Dorsolateral prefrontal cortex (tissue), 120 donors: ENCODE measurements at regions of chr1 and their contacts with region 1.

Region 1: DNA sequence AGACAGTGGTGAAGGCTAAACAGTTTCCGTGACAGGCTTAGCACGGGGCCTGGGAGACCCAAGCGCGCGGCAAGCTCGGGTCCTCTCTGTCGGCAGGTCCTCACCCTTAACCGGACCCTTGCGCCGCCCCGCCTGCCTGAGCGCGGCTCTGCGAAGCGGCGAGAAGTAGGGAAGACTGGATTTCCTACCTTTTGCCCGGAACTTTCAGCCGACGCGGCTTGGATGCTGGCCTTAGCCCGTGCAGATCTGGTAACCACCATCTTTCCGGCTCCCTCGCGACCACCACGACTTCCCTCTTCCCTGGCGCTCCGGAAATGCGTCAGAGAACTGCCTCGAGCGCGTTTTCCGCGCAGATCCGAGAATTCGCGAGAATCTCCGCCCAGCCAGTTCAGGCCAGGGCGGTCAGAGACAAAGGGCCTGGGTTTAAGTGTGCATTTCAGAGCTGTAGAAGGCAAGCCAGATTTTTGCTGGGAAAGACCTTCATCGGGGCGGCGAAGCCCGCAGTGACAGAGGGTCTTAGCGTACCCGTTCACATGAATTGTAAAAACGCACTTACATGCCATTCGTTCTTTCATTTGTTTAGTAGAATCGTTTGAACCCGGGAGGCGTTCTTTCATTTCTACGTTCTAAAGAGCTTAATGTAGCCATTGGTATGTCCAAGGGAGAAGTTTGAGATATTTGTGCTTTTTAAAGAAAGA is at the start of gene DNTTIP2:
- DNase-seq: peak; percentile 82 to 95 (median 92)
- H3K4me3 ChIP-seq: peak within 1 kb of the TSS; percentile 70 to 99 (median 93)
- H3K27ac ChIP-seq: peak within 1 kb of the TSS; percentile 35 to 99 (median 95)
- H3K27me3 ChIP-seq: no peaks in the 10 kb centered on the region
- CTCF ChIP-seq: peak in 28 of 56 donors; percentile 6 to 56 (median 21)
- total RNA-seq, gene DNTTIP2: 26.4 to 67.8 (median 41.9) TPM

Region 2: DNA sequence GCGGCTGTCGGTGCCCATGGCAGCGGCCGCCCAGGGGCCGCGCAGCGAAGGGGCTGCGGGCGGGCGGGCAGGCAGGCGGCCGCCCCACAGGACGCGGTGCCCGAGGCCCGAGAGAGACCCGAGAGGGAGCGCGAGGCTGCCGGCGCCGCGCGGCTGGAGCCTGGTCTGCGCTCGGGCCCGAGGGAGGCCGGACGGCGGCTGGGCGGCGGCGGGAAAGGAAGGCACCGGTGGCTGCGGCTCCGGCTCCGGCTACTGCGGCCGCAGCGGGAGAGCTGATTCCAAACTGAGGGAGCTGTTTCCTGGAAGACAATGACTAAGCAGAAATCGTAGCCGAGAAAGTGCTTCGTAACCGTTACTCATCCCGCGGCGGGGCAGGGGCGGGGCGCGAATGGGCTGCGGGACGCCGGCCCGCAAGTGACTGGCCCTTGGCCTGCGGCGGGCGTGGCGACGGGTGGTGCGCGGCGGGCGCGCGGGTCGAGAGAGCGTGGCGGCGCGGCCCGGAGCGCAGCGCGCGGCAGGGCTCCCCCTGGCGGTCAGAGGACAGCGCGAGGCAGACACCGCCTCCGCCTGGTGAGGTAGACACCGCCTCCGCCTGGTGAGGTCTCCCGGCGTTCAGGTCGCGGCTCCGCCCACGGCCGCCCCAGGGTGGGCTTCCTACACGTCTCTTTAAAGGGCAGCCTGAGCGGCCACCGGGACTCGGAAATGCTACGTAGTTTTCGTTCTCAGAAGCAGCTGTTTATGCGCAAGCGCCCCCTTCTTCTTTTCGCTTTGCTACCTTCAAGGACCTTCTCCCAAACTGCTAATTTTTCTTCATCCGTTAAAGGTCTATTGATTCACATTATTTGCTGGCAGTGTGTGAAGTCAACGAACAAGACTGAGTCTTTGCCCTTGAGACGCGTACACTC is 30.4 kb after region 1 on chr1 and contains the start of gene GCLM:
- intact Hi-C with region 1: loop called (anchors 2 kb)
- DNase-seq: peak; percentile 76 to 93 (median 84)
- H3K4me3 ChIP-seq: peak within 1 kb of the TSS; percentile 47 to 95 (median 80)
- H3K27ac ChIP-seq: peak within 1 kb of the TSS; percentile 18 to 93 (median 81)
- H3K27me3 ChIP-seq: no peaks in the 10 kb centered on the region
- CTCF ChIP-seq: peak; percentile 59 to 99 (median 88)
- total RNA-seq, gene GCLM: 13.0 to 31.9 (median 22.7) TPM

Region 3: DNA sequence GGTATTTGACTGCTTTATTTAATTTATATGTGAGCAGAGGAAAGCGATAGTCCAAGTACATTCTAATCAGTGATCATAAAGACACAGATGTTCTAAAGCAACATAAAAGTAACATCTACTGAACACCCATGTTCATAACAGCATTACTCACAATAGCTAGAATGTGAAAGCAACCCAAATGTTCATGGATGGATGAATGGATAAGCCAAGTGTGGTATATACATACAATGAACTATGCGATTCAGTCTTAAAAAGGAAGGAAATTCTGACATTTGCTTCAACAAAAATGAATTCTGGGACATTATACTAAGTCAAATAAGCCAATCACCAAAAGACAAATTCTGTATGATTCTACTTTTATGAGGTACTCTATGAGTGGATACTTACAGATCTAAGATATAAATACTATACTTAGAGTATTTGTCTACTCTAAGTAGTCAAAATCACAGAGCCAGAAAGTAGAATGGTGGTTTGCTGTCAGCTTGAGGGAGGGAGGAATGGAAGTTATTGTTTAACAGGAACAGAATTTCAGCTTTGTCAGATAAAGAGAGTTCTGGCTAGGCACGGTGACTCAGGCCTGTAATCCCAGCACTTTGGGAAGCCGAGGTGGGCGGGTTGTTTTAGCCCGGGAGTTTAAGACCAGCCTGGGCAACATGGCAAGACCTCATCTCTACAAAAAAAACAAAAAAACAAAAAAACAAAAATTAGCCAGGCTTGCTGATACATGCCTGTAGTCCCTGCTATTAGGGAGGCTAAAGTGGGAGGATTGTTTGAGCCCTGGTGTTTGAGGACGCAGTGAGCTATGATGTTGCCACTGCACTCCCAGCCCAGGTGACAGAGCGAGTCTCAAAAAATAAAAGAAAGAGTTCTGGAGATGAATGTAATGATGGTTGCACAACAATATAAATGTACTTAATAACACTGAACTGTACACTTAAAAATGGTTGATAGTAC is 438.1 kb after region 1 on chr1:
- intact Hi-C with region 1: no loop called
- DNase-seq: no peak
- H3K4me3 ChIP-seq: no peak overlapping the region
- H3K27ac ChIP-seq: no peak overlapping the region
- H3K27me3 ChIP-seq: peaks cover 0 to 4% (median 0%) of the 10 kb centered on the region in 45 donors
- CTCF ChIP-seq: no peak